Dendritic cell treated with granulocyte-macrophage colony-stimulating factor and Interleukin-4, amounts not matched to agents 40 ng/mL and 50 ng/mL, for 4 days (primary cell): ENCODE measurements at regions of chr21 and their contacts with region 1.

Region 1: GRCh38 chr21:28992526-28993292 is at the start of gene LTN1:
- H3K4me3 Mint-ChIP-seq: peak within 1 kb of the TSS; percentile 86
- H3K27ac Mint-ChIP-seq: peak within 1 kb of the TSS; percentile 99
- H3K4me1 Mint-ChIP-seq: peaks cover 27% of the 10 kb centered on the region
- H3K27me3 Mint-ChIP-seq: no peaks in the 10 kb centered on the region

Region 2: GRCh38 chr21:28884976-28885852 is 107.5 kb before region 1 on chr21:
- intact Hi-C with region 1: loop called (anchors 10 kb)
- H3K4me3 Mint-ChIP-seq: peak overlapping the region; percentile 90
- H3K27ac Mint-ChIP-seq: peak overlapping the region; percentile 98
- H3K4me1 Mint-ChIP-seq: no peaks in the 10 kb centered on the region
- H3K27me3 Mint-ChIP-seq: peaks cover 18% of the 10 kb centered on the region

Region 3: GRCh38 chr21:29024474-29025327 is 32.0 kb after region 1 on chr21 and contains the start of gene USP16:
- intact Hi-C with region 1: loop called (anchors 1 kb)
- H3K4me3 Mint-ChIP-seq: peak within 1 kb of the TSS; percentile 86
- H3K27ac Mint-ChIP-seq: peak within 1 kb of the TSS; percentile 98
- H3K4me1 Mint-ChIP-seq: peaks cover 20% of the 10 kb centered on the region
- H3K27me3 Mint-ChIP-seq: no peaks in the 10 kb centered on the region

Region 4: GRCh38 chr21:29073222-29074006 is 80.7 kb after region 1 on chr21 and contains the start of gene CCT8:
- intact Hi-C with region 1: loop called (anchors 1 kb)
- H3K4me3 Mint-ChIP-seq: peak within 1 kb of the TSS; percentile 97
- H3K27ac Mint-ChIP-seq: peak within 1 kb of the TSS; percentile 95
- H3K4me1 Mint-ChIP-seq: peaks cover 34% of the 10 kb centered on the region
- H3K27me3 Mint-ChIP-seq: no peaks in the 10 kb centered on the region